A549 (cell line): ENCODE measurements at regions of chr14 and their contacts with region 1.

Region 1: GRCh38 chr14:23910101-23910875 is 43.3 kb upstream of the DHRS4 start:
- DNase-seq: peak; percentile 65 to 69
- ATAC-seq: peak; percentile 95 to 99
- H3K4me3 ChIP-seq: no peak overlapping the region
- H3K27ac ChIP-seq: no peak overlapping the region
- H3K4me1 ChIP-seq: no peaks in the 10 kb centered on the region
- CTCF ChIP-seq: peak; percentile 80
- EP300 ChIP-seq: no peak
- POLR2A ChIP-seq: no peak
- RAD21 ChIP-seq: peak; percentile 90 to 94

Region 2: GRCh38 chr14:23588884-23589598 is 321.2 kb before region 1 on chr14:
- CTCF ChIA-PET with region 1: interaction called, 39 read pairs
- POLR2A ChIA-PET with region 1: no interaction called
- DNase-seq: peak; percentile 88 to 90
- ATAC-seq: peak; percentile 99 to 100
- H3K4me3 ChIP-seq: no peak overlapping the region
- H3K27ac ChIP-seq: peak overlapping the region in 1 of 2 experiments; percentile 65; a peak in 2 of 6 replicates
- H3K4me1 ChIP-seq: peaks cover 8% of the 10 kb centered on the region; the same call in 2 of the 3 replicates
- CTCF ChIP-seq: peak; percentile 77
- EP300 ChIP-seq: no peak
- POLR2A ChIP-seq: no peak
- RAD21 ChIP-seq: peak; percentile 82 to 87

Region 3: GRCh38 chr14:23665375-23666192 is 244.7 kb before region 1 on chr14:
- CTCF ChIA-PET with region 1: interaction called, 29 read pairs
- POLR2A ChIA-PET with region 1: no interaction called
- DNase-seq: peak; percentile 27 to 63
- ATAC-seq: peak; percentile 82 to 91
- H3K4me3 ChIP-seq: no peak overlapping the region
- H3K27ac ChIP-seq: no peak overlapping the region
- H3K4me1 ChIP-seq: no peaks in the 10 kb centered on the region
- CTCF ChIP-seq: peak; percentile 50
- EP300 ChIP-seq: no peak
- POLR2A ChIP-seq: no peak
- RAD21 ChIP-seq: peak; percentile 44 to 57; a peak in 4 of 5 replicates

Region 4: GRCh38 chr14:23727566-23728335 is 182.5 kb before region 1 on chr14:
- CTCF ChIA-PET with region 1: interaction called, 180 read pairs
- POLR2A ChIA-PET with region 1: interaction called, 3 read pairs
- DNase-seq: peak; percentile 63 to 66
- ATAC-seq: peak; percentile 84 to 94
- H3K4me3 ChIP-seq: no peak overlapping the region
- H3K27ac ChIP-seq: no peak overlapping the region
- H3K4me1 ChIP-seq: no peaks in the 10 kb centered on the region
- CTCF ChIP-seq: peak; percentile 71
- EP300 ChIP-seq: no peak
- POLR2A ChIP-seq: no peak
- RAD21 ChIP-seq: peak; percentile 75 to 86

Region 5: DNA sequence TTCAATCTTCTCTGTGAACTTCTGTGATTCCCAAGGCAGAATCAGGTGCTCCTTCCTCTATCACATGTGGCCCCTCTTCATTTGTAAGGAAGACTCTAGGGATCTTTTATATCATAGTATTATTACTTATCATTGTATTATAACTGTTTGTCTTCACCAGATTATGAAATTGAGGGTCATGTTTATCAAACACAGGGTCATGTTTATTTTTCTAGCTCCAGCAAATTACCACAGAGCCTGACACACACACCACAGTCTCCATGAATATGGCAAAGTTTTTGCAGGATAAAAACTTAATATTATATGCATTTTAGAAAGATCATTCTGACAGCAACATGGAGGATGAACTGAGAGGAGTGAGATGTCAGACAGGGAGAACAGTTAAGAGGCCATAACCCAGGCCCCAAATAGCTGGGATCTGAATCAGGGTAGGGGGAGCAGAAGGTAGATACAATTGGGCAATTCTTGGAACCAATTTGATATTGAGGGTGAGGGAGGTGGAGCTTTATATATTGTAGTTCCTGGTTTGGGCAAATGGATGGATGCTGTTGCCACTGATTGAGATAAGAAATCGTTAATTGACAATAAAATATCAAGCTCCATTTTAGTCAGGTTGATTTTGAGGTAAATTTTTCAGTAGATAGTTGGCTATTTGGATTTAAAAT is 143.4 kb before region 1 on chr14:
- CTCF ChIA-PET with region 1: interaction called, 10 read pairs
- POLR2A ChIA-PET with region 1: no interaction called
- DNase-seq: no peak
- ATAC-seq: no peak
- H3K4me3 ChIP-seq: no peak overlapping the region
- H3K27ac ChIP-seq: no peak overlapping the region
- H3K4me1 ChIP-seq: no peaks in the 10 kb centered on the region
- CTCF ChIP-seq: no peak
- EP300 ChIP-seq: no peak
- POLR2A ChIP-seq: no peak
- RAD21 ChIP-seq: no peak

Region 6: GRCh38 chr14:23899788-23900187 is 10.5 kb before region 1 on chr14:
- CTCF ChIA-PET with region 1: interaction called, 20 read pairs
- POLR2A ChIA-PET with region 1: no interaction called
- DNase-seq: no peak
- ATAC-seq: no peak
- H3K4me3 ChIP-seq: no peak overlapping the region
- H3K27ac ChIP-seq: no peak overlapping the region
- H3K4me1 ChIP-seq: no peaks in the 10 kb centered on the region
- CTCF ChIP-seq: no peak
- EP300 ChIP-seq: no peak
- POLR2A ChIP-seq: no peak
- RAD21 ChIP-seq: no peak

Region 7: GRCh38 chr14:23929822-23930294 is 19.6 kb after region 1 on chr14:
- CTCF ChIA-PET with region 1: interaction called, 26 read pairs
- POLR2A ChIA-PET with region 1: no interaction called
- DNase-seq: peak; percentile 68 to 73
- ATAC-seq: peak; percentile 87 to 99
- H3K4me3 ChIP-seq: no peak overlapping the region
- H3K27ac ChIP-seq: no peak overlapping the region
- H3K4me1 ChIP-seq: no peaks in the 10 kb centered on the region
- CTCF ChIP-seq: peak; percentile 66
- EP300 ChIP-seq: no peak
- POLR2A ChIP-seq: no peak
- RAD21 ChIP-seq: peak; percentile 63 to 72

Region 8: DNA sequence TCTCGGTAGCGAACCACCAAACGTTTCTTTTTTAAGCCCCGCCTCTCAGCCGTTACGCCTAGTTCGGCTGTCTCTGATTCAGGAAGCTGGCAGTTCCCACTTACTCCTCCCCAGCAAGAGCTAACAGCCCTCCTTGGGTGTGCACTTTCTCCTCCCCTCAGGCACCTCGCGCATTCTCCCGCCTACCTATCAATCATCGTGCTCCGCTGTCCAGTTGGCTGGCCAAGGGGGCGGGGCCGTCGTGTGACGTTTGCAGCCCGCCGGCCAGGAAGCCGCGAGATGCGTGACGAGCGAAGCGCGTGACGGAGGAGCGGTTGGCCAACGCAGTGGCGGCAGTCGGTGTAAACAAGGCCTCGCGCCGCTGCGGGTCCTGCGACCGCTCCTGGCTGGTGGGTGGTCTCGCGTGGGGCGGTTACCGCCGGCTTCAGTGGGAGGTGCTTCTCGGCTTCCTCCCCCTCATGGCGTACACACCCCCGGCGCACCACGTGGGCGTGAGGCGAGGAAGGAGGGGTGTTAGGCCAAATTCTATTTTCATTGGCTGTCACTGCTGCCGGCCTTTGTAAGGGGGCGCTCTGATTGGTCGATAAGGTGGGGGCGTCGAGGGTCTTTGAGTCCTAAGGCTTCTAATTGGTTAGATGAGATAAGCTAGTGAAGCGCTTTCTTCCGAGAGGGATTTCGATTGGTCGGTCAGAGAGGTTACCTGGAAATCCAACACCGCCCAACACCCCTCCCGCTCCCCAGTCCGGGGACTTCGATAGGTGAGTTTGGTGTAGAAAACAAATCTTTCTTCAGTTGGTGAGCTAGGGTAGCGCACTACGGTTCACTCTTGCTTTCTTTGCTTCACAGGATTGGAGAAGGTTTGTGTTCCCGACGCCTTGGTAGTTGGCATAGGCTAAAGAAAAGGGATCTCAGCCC is 204.5 kb after region 1 on chr14 and contains the starts of genes DCAF11 and NRL:
- CTCF ChIA-PET with region 1: no interaction called
- POLR2A ChIA-PET with region 1: no interaction called
- DNase-seq: peak; percentile 99 to 100
- ATAC-seq: peak; percentile 92 to 94
- H3K4me3 ChIP-seq: peak within 1 kb of the TSS; percentile 62
- H3K27ac ChIP-seq: peak within 1 kb of the TSS; percentile 95 to 96
- H3K4me1 ChIP-seq: peaks cover 11% of the 10 kb centered on the region; the same call in 1 of the 3 replicates
- CTCF ChIP-seq: no peak
- EP300 ChIP-seq: no peak
- POLR2A ChIP-seq: 0 out of 2 replicates have a peak, but pooled peaks have one; percentile 3
- RAD21 ChIP-seq: no peak
- polyA plus RNA-seq, gene DCAF11: 27.9 and 30.2 TPM in 2 replicates
- polyA plus RNA-seq, gene NRL: 0.86 and 0.97 TPM in 2 replicates